Activated B cell treated with CpG ODN at 0.5 μM for 24 hours (primary cell): ENCODE measurements at regions of chr2 and their contacts with region 1.

Region 1: DNA sequence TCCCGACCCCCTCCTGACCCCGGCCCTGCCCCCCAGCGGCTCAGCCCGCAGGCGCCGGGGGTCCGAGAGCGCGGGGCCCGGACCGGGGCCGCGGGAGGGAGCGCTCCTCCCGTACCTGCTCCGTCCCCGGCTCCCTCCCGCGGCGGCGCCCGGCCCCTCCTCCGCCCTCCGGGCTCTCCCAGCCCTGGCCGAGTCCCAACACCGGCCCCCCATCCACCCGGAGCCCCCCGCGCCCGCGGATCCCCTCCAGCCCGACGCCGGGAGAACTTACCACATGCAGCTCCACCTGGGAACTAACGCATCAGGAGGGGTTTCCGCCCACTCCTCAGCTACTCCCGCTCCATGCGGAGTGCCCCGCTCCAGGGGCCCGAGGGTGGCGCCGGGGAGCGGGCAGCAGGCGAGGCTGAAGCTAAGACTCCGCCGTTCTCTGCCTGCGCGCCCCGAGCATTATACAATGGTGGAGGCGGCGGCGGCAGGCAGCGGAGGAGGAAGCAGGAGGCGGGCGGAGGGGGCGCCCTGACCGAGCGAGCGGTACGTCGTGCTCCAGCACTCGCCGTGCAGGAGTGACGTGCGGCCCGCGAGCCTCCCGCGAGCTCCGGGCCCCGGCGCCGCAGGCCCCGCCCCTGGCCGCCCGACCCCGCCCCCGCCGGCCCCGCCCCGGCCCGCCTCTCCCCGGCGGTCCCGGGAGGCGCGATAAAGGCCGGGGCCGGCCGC is at the start of gene SERTAD2:
- DNase-seq: peak; percentile 84
- ATAC-seq: peak; percentile 79
- H3K4me3 Mint-ChIP-seq: peak within 1 kb of the TSS; percentile 91
- H3K27ac Mint-ChIP-seq: peak within 1 kb of the TSS; percentile 93
- H3K4me1 Mint-ChIP-seq: peaks cover 82% of the 10 kb centered on the region
- H3K27me3 Mint-ChIP-seq: no peaks in the 10 kb centered on the region
- CTCF ChIP-seq: no peak
- total RNA-seq, gene SERTAD2: 45.6 and 47.3 TPM in 2 replicates

Region 2: DNA sequence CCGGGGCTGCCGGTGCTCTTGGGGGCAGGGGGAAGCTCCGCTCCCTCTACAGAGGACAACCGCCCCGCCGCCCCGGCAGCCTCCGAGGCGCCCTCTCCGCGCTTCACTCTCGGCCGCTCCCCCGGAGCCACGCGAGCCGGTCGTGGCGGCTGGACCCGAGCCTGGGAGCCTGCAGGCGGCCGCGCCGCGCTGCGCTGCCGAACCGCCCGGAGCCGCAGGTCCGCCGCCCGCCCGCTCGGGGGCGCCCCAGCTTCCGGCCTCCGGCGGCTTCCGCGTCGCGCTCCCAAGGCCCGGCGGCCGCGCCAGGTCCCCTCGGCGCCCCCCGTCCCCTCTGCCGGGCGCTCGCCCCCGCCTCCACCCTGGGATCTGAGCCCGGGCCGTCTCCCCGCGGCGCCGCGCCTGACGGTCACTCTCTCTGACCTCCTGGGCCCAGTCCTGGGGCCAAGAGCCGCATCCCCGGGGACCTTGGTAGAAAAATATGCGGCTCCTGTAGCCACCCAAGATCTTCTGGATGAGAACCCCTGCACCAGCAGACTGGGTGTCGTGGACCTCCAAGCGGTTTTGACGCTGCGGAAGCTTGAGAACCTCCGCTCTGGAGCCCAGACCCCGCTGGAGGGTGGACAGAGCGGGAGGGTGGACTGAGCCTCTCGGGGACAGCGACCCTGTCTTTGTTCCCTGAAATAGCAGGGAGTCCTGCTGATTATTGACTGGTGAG is 44.1 kb before region 1 on chr2:
- CTCF ChIA-PET with region 1: interaction called, 12 read pairs
- POLR2A ChIA-PET with region 1: interaction called, 59 read pairs
- intact Hi-C with region 1: no loop called
- DNase-seq: peak; percentile 82
- ATAC-seq: peak; percentile 71
- H3K4me3 Mint-ChIP-seq: peak overlapping the region; percentile 84
- H3K27ac Mint-ChIP-seq: peak overlapping the region; percentile 77
- H3K4me1 Mint-ChIP-seq: peaks cover 34% of the 10 kb centered on the region
- H3K27me3 Mint-ChIP-seq: no peaks in the 10 kb centered on the region
- CTCF ChIP-seq: no peak

Region 3: GRCh38 chr2:64679673-64680425 is 26.3 kb after region 1 on chr2:
- CTCF ChIA-PET with region 1: interaction called, 3 read pairs
- POLR2A ChIA-PET with region 1: interaction called, 34 read pairs
- intact Hi-C with region 1: no loop called
- DNase-seq: no peak
- ATAC-seq: no peak
- H3K4me3 Mint-ChIP-seq: no peak overlapping the region
- H3K27ac Mint-ChIP-seq: no peak overlapping the region
- H3K4me1 Mint-ChIP-seq: peaks cover 38% of the 10 kb centered on the region
- H3K27me3 Mint-ChIP-seq: no peaks in the 10 kb centered on the region
- CTCF ChIP-seq: no peak

Region 4: DNA sequence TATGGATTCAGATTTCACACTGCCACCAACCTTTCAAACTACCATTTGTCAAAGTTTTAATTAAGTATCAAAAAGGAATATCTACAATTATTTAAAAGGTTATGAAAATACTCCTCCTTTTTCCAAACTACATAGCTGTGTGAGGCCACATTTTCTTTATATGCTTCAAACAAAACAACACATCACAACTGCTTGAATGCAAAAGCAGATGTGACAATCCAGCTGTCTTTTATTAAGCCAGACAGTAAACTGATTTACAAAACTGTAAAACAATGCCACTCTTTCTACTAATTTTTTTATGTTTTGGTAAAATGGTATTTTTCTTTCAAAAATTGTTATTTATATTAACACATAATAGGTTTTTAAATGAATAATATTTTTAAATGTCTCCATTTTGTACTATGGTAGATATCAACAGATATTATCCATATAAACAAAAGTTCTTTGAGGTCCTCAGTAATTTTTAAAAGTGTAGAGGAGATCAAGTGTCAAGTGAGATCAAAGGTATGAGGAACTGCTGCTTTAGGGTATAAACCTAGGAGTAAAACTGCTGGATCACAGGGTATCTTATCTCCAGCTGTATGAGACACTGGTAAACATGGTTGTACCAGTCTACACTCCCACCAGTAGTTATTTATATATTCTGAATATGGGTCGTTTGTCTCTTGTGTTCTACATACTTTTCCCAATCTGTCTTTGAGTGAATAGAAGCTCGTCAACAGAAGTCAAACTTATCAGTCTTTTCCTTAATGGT is 69.0 kb after region 1 on chr2:
- CTCF ChIA-PET with region 1: interaction called, 32 read pairs
- POLR2A ChIA-PET with region 1: interaction called, 164 read pairs
- intact Hi-C with region 1: loop called (anchors 1 kb)
- DNase-seq: no peak
- ATAC-seq: no peak
- H3K4me3 Mint-ChIP-seq: no peak overlapping the region
- H3K27ac Mint-ChIP-seq: no peak overlapping the region
- H3K4me1 Mint-ChIP-seq: peaks cover 32% of the 10 kb centered on the region
- H3K27me3 Mint-ChIP-seq: no peaks in the 10 kb centered on the region
- CTCF ChIP-seq: no peak

Region 5: DNA sequence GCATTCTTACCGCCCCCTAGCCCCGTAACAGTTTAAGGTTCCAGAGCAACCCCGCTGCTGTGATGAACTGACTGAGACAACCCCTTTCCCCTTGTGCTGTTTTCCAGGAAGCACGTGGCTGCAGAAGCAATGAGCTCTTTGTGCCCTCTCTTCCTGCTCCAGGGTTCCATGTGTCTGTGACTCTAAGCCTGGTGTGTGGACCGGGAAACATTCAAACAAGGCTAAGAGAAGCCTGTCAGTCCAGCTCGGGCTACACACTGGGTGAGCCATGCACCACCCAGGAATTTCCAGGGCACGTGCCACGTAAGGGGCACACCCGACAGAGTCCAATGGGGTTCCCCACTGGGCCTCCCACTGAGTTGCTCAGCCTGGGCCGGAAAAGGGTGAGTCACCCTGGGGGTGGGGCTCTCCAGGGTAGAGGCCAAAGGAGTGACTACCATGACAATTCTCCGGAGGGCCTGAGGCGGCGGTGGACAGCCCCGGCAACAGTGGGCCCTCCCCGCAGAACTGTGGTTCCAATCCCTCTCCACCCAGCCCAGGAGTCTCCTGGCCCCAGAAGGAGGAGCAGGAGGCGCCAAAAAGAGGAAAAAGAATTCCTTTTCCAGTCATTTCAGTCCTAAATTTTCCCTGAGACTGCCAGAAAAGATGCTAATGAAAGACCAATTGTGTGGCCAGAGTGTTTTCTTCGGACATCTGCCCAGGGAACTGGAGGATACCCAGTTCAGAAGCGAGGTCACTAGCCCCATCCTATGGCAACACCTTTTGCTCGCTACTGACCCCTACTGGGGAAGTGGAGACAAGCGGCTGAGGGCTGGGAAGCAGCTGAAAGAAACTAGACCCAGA is 177.8 kb after region 1 on chr2:
- CTCF ChIA-PET with region 1: interaction called, 8 read pairs
- POLR2A ChIA-PET with region 1: interaction called, 66 read pairs
- intact Hi-C with region 1: loop called (anchors 1 kb)
- DNase-seq: peak; percentile 75
- ATAC-seq: peak; percentile 96
- H3K4me3 Mint-ChIP-seq: peak overlapping the region; percentile 63
- H3K27ac Mint-ChIP-seq: peak overlapping the region; percentile 82
- H3K4me1 Mint-ChIP-seq: peaks cover 21% of the 10 kb centered on the region
- H3K27me3 Mint-ChIP-seq: no peaks in the 10 kb centered on the region
- CTCF ChIP-seq: no peak

Region 6: DNA sequence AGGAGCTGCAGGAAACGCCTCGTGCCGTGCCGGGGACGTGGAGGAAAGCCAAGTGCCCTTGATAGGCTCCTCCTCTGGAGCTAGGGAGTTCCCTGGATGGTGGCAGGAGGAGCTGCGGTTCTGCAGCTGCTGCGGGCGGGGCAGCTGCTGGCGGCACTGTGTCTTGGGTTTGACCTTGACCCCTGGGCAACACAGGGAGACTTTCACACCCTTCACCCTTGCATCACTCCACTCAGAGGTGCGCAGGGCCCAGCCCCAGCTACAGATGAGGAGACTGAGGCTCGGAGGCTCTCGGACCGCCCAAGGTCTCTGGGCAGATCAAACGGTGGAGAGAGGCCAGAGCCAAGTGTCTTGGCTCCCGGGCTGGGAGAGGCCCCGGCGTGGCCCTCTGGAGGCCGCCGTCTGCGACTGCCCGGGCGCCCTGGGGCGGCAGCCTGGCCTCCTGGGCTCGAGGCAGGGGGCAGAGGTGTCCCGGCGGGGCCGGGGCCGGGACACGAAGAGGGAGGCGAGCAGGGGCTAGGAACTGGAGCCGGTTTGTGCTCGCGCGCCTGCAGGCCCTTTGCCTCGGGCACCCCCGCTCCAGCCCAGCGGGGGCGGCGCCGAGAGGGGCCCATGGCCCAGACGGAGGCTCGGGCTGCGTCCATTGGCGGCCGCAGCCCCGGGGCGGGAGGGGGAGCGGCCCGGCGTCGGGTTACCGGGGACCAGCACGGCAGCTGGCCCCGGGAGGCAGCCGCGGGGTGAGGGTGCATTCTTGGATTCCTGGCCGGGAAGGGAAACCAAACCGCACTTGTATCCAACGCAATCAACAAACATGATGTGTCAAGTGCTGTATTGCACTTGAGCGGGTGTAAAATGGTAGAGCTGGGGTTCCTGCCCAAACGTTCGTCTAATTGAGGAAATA is 206.1 kb after region 1 on chr2:
- CTCF ChIA-PET with region 1: interaction called, 47 read pairs
- POLR2A ChIA-PET with region 1: interaction called, 276 read pairs
- intact Hi-C with region 1: no loop called
- DNase-seq: peak; percentile 44
- ATAC-seq: peak; percentile 19
- H3K4me3 Mint-ChIP-seq: peak overlapping the region; percentile 76
- H3K27ac Mint-ChIP-seq: peak overlapping the region; percentile 94
- H3K4me1 Mint-ChIP-seq: peaks cover 36% of the 10 kb centered on the region
- H3K27me3 Mint-ChIP-seq: no peaks in the 10 kb centered on the region
- CTCF ChIP-seq: no peak